ENCODE measurements at regions of chr17 and their contacts with region 1.

Region 1: GRCh38 chr17:27332485-27333409 is 38.8 kb downstream of the WSB1 start:
- DNase-seq: peak; percentile 91
- H3K27ac ChIP-seq: peak overlapping the region; percentile 94
- CTCF ChIP-seq: peak; percentile 85

Region 2: GRCh38 chr17:27236717-27237315 is 95.9 kb before region 1 on chr17:
- CTCF ChIA-PET with region 1: interaction called, 40 read pairs
- POLR2A ChIA-PET with region 1: no interaction called
- DNase-seq: peak; percentile 62
- H3K27ac ChIP-seq: no peak overlapping the region
- CTCF ChIP-seq: peak; percentile 85

Region 3: DNA sequence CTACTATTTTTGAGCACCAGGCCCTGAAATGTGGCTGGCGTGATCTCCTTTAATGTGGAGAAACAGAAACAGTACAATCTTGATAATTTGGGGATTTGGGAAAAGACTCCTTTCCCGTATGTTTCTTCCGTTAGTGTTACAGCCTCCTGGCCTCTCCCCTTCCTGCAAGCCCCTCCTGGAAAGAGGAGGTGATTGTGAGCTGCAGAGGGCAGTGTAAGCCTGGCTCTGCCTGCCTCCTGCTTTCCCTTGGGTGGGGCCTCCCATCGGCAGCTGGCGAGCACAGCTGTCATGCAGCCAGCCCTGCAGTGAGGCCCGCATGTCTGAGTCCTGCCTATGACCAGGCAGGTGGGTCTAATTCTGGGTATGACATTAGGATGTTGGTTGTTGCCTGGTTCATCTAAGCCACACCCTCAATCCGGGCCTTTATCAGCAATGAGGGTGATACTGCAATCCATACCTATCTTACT is 87.5 kb before region 1 on chr17:
- CTCF ChIA-PET with region 1: interaction called, 11 read pairs
- POLR2A ChIA-PET with region 1: no interaction called
- DNase-seq: peak; percentile 83
- H3K27ac ChIP-seq: peak overlapping the region; percentile 90
- CTCF ChIP-seq: peak; percentile 77